ENCODE measurements at regions of chr10 and their contacts with region 1.

Region 1: GRCh38 chr10:96719850-96720421 is 378 bp downstream of the PIK3AP1 start:
- DNase-seq: peak; percentile 63 to 73
- H3K4me3 ChIP-seq: peak overlapping the region; percentile 54
- H3K4me3 Mint-ChIP-seq: peak overlapping the region; percentile 84
- H3K27ac Mint-ChIP-seq: no peak overlapping the region
- H3K4me1 ChIP-seq: peaks cover 13% of the 10 kb centered on the region; the same call in 1 of the 2 replicates
- H3K4me1 Mint-ChIP-seq: no peaks in the 10 kb centered on the region
- H3K27me3 ChIP-seq: peaks cover 5% of the 10 kb centered on the region
- H3K27me3 Mint-ChIP-seq: peaks cover 19% of the 10 kb centered on the region
- CTCF ChIP-seq: peak; percentile 28 to 54

Region 2: GRCh38 chr10:95998255-95998784 is 721.6 kb before region 1 on chr10:
- CTCF ChIA-PET with region 1: no interaction called
- POLR2A ChIA-PET with region 1: no interaction called
- intact Hi-C with region 1: no loop called
- DNase-seq: no peak
- H3K4me3 ChIP-seq: no peak overlapping the region
- H3K4me3 Mint-ChIP-seq: no peak overlapping the region
- H3K27ac Mint-ChIP-seq: no peak overlapping the region
- H3K4me1 ChIP-seq: no peaks in the 10 kb centered on the region
- H3K4me1 Mint-ChIP-seq: no peaks in the 10 kb centered on the region
- H3K27me3 ChIP-seq: no peaks in the 10 kb centered on the region
- H3K27me3 Mint-ChIP-seq: no peaks in the 10 kb centered on the region
- CTCF ChIP-seq: no peak

Region 3: DNA sequence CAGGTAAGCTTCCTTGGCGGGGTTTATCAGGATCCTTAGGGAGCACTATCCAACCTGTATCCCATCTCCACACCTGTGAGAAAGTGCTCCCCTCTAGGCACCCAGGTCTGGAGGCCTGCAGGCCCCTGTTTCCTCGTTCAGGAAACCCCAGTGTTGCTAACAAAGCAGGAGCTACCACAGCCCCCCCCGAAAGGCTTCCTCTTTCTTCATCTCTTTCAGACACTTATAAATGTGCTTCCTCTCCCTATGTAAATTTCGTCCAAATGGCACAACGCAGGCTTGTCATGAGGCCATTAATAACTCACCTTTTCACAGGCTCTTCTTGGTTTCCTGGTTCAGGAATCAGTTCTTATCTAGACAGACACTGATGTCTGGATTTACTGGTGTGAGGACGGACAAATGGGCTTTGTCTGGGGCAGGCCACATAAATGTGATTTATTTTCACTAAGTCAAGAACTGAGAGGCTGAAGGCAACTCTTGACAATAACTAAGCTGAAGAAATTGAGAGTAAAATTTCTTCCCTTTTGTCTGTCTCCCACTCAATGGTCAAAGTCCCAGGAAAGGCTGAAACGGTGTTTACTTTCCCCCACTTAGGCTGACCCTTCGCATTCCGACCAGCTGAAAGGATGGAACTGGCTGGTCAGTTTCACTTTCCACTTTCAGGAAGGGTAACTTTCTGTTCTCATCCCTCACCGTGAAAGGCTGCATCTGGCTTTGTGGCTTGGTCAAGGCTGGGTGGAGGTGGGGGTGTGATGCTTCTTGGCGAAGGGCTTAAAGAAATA is 46.4 kb before region 1 on chr10:
- CTCF ChIA-PET with region 1: no interaction called
- POLR2A ChIA-PET with region 1: no interaction called
- intact Hi-C with region 1: loop called (anchors 1 kb)
- DNase-seq: peak; percentile 84 to 87
- H3K4me3 ChIP-seq: no peak overlapping the region
- H3K4me3 Mint-ChIP-seq: peak overlapping the region; percentile 58
- H3K27ac Mint-ChIP-seq: peak overlapping the region; percentile 85
- H3K4me1 ChIP-seq: peaks cover 67% of the 10 kb centered on the region
- H3K4me1 Mint-ChIP-seq: peaks cover 34% of the 10 kb centered on the region
- H3K27me3 ChIP-seq: no peaks in the 10 kb centered on the region
- H3K27me3 Mint-ChIP-seq: no peaks in the 10 kb centered on the region
- CTCF ChIP-seq: no peak

Measured in Caco-2 (cell line).